Endothelial cell of umbilical vein (primary cell): ENCODE measurements at regions of chr9 and their contacts with region 1.

Region 1: GRCh38 chr9:91193658-91194391 is 167.9 kb downstream of the AUH start:
- DNase-seq: peak; percentile 94
- H3K4me3 ChIP-seq: peak overlapping the region in 2 of 3 experiments; percentile 28 to 51
- H3K27ac ChIP-seq: peak overlapping the region; percentile 100
- H3K4me1 ChIP-seq: peaks cover 21% of the 10 kb centered on the region
- H3K27me3 ChIP-seq: no peaks in the 10 kb centered on the region
- CTCF ChIP-seq: no peak
- POLR2A ChIP-seq: peak; percentile 40

Region 2: DNA sequence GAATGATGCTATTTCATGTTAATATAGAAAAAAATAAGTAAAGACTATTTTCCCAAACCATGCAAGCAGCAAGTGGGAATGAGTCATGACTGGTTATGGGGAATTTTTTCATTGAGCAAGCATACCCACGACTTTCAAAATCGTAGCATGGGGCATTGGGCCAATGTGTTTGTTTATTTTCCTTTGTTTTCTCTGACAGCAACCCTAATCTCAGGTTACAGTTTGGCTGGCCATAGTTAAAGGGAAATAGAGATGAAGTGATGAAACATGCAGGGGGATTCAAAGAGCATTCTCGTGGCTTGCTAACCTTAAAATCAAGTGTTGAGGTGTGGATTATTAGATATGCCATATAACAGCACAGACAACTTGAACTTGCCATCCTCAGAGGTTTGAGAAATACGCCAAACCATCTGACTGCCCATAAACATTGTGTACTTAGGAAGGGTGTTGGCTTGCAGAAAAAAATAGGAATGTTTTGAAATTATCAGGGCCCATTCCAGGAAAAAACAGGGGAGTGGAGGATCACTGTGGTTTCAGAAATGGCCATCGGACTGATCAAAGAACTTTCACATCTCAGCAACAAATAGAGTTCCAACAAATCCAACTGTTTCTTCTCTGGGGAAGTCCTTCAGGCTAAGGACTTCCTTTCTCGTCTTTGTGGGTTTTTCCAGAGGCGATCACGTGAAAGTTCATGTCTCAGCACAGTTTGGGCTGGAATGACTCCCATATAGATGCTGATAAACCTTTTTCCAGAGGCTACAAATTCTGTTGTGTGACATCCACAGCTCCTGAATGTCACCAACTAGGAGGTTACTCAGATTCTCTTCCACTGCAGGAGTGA is 133.1 kb before region 1 on chr9:
- CTCF ChIA-PET with region 1: no interaction called
- POLR2A ChIA-PET with region 1: no interaction called
- dilution Hi-C with region 1: no loop called
- intact Hi-C with region 1: loop called (anchors 1 kb)
- DNase-seq: peak; percentile 98
- H3K4me3 ChIP-seq: peak overlapping the region in 1 of 3 experiments; percentile 2
- H3K27ac ChIP-seq: peak overlapping the region; percentile 68
- H3K4me1 ChIP-seq: peaks cover 43% of the 10 kb centered on the region
- H3K27me3 ChIP-seq: no peaks in the 10 kb centered on the region
- CTCF ChIP-seq: no peak
- POLR2A ChIP-seq: no peak

Region 3: DNA sequence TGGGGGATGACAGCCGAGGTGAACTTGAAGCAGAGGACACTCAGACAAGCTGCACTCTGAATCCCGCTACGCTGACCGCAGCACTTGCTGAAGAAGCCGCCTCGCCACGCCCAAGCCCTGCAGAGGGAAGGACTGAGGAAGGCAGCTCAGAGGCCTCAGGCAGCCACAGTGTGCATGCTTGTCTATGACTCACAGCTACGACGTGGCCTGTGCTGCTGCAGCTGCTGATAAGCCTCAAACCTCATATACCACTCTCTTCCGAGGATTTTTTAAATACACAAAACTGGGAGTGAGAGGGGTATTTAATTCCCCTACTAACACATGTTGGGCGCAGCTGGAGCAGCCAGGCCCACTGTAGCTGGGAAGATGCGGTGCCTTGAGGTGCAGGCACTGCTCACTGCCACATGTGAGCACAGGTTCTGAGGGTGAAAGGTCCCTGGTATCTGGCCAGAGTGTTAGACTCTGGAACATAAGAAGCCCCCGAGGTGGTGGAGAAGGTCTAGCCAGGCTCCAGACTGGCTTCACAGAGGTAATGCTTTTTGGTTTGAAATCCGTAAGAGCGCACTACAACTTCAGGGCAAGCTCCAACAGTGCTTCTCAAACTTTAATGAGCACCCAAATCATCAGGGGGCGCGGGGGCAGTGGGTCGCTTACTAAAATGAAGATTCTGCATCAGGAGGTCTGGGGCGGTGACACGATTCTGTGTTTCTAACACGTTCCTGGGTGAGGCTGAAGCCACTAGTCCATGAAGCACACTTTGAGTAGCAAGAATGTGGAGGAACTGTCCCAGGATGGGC is 28.9 kb before region 1 on chr9:
- CTCF ChIA-PET with region 1: interaction called, 4 read pairs
- POLR2A ChIA-PET with region 1: no interaction called
- dilution Hi-C with region 1: no loop called
- intact Hi-C with region 1: loop called (anchors 1 kb)
- DNase-seq: peak; percentile 69
- H3K4me3 ChIP-seq: no peak overlapping the region
- H3K27ac ChIP-seq: peak overlapping the region; percentile 14
- H3K4me1 ChIP-seq: peaks cover 15% of the 10 kb centered on the region
- H3K27me3 ChIP-seq: no peaks in the 10 kb centered on the region
- CTCF ChIP-seq: no peak
- POLR2A ChIP-seq: no peak

Region 4: GRCh38 chr9:91177661-91178280 is 16.1 kb before region 1 on chr9:
- CTCF ChIA-PET with region 1: no interaction called
- POLR2A ChIA-PET with region 1: no interaction called
- dilution Hi-C with region 1: no loop called
- intact Hi-C with region 1: no loop called
- DNase-seq: no peak
- H3K4me3 ChIP-seq: no peak overlapping the region
- H3K27ac ChIP-seq: no peak overlapping the region
- H3K4me1 ChIP-seq: no peaks in the 10 kb centered on the region
- H3K27me3 ChIP-seq: no peaks in the 10 kb centered on the region
- CTCF ChIP-seq: no peak
- POLR2A ChIP-seq: no peak

Region 5: GRCh38 chr9:91258451-91258850 is 64.6 kb after region 1 on chr9:
- CTCF ChIA-PET with region 1: no interaction called
- POLR2A ChIA-PET with region 1: no interaction called
- dilution Hi-C with region 1: no loop called
- intact Hi-C with region 1: no loop called
- DNase-seq: no peak
- H3K4me3 ChIP-seq: no peak overlapping the region
- H3K27ac ChIP-seq: no peak overlapping the region
- H3K4me1 ChIP-seq: no peaks in the 10 kb centered on the region
- H3K27me3 ChIP-seq: no peaks in the 10 kb centered on the region
- CTCF ChIP-seq: no peak
- POLR2A ChIP-seq: no peak

Region 6: DNA sequence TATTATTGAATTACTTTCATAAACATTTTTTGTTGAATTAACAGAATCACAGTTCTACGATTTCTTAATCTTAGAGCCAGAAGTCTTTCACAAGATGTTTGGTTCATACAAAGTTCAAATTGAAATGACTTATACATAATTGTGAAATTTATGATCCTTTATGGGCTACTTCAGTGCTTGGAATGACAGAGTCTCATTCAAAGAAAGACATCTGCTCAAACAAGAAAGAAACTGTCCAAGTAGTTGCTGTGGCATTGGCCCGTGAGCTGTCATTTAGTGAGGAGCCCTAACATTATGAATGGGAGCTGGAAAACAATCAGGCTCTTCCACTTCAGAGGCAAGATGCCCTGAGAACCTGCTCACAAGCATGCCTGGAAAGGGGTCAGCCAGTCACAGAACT is 104.5 kb after region 1 on chr9:
- CTCF ChIA-PET with region 1: no interaction called
- POLR2A ChIA-PET with region 1: no interaction called
- dilution Hi-C with region 1: no loop called
- intact Hi-C with region 1: loop called (anchors 1 kb)
- DNase-seq: no peak
- H3K4me3 ChIP-seq: no peak overlapping the region
- H3K27ac ChIP-seq: no peak overlapping the region
- H3K4me1 ChIP-seq: peaks cover 9% of the 10 kb centered on the region
- H3K27me3 ChIP-seq: no peaks in the 10 kb centered on the region
- CTCF ChIP-seq: no peak
- POLR2A ChIP-seq: no peak

Region 7: DNA sequence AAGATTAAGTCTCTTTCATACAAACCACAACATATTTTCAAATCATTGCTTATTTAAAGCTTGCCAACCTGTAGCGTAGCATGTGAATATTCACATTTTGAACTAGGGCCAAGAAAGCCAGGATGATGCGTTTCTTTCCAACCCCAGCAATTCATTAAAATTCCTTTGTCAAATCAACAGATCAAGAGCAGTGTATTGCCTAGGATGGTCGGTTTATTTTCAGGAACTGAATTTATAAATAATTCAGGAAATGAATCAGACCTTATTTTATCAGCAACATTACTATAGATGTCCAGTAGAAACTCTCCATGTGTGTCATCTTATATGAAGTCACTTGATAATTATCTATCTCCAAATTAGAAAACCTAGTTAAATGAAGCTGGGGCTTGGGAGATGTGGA is 181.1 kb after region 1 on chr9:
- CTCF ChIA-PET with region 1: no interaction called
- POLR2A ChIA-PET with region 1: no interaction called
- dilution Hi-C with region 1: no loop called
- intact Hi-C with region 1: loop called (anchors 1 kb)
- DNase-seq: peak; percentile 60
- H3K4me3 ChIP-seq: no peak overlapping the region
- H3K27ac ChIP-seq: no peak overlapping the region
- H3K4me1 ChIP-seq: peaks cover 20% of the 10 kb centered on the region
- H3K27me3 ChIP-seq: no peaks in the 10 kb centered on the region
- CTCF ChIP-seq: no peak
- POLR2A ChIP-seq: no peak